ENCODE measurements at regions of chr15 and their contacts with region 1.

Region 1: DNA sequence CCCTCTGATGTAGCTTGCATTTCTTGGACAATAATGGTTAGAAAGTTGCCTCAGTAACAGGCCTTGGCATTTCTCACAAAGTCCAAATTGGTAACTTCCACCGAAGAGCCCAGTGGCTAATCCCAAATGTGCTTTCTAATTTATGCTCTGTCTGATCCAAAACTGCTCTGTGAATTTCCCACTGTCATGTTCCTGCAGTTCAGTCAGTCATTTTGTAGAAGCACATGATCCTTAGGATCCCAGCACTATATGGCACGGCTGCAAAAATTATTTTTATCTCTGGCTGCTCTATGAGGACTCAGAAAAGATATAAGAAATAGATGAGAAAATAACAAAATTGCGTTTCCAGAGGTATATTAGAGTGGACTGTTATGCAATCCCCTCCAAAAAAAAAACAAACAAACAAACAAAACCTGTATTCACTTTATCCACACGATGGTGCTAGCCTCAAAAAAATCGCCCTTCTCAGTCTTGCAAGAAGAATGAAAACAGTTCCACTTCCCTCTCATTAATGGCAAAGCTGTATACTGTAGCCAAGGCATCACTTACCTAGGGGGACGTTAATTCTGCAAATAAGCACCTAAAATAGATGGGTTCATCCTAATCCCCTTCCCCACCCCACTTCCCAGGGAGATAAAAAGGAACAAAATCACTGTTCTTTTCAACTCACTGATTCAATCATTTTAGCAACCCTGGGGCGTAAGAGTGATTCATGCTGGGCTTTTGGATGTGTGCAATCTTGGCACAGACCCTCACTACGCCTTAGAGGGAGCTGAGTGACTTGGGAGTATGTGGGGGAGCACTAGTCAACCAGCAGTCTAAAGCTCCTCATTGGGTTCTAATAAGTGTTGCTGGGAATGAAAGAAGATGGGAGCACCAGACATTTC is 61.3 kb downstream of the TMCO5A start:
- DNase-seq: peak in 1 of 5 donors; percentile 54
- H3K4me3 ChIP-seq: no peak overlapping the region
- H3K27ac ChIP-seq: no peak overlapping the region
- H3K4me1 ChIP-seq: peaks cover 3% of the 10 kb centered on the region
- H3K27me3 ChIP-seq: no peaks in the 10 kb centered on the region
- CTCF ChIP-seq: peak; percentile 36 to 60 (median 56)
- EP300 ChIP-seq: no peak
- POLR2A ChIP-seq: no peak

Region 2: GRCh38 chr15:38354315-38354929 is 358.7 kb after region 1 on chr15:
- intact Hi-C with region 1: loop called (anchors 5 to 10 kb)
- DNase-seq: peak; percentile 30 to 66 (median 46)
- H3K4me3 ChIP-seq: no peak overlapping the region
- H3K27ac ChIP-seq: no peak overlapping the region
- H3K4me1 ChIP-seq: no peaks in the 10 kb centered on the region
- H3K27me3 ChIP-seq: no peaks in the 10 kb centered on the region
- CTCF ChIP-seq: peak; percentile 30 to 66 (median 50)
- EP300 ChIP-seq: no peak
- POLR2A ChIP-seq: no peak

Region 3: DNA sequence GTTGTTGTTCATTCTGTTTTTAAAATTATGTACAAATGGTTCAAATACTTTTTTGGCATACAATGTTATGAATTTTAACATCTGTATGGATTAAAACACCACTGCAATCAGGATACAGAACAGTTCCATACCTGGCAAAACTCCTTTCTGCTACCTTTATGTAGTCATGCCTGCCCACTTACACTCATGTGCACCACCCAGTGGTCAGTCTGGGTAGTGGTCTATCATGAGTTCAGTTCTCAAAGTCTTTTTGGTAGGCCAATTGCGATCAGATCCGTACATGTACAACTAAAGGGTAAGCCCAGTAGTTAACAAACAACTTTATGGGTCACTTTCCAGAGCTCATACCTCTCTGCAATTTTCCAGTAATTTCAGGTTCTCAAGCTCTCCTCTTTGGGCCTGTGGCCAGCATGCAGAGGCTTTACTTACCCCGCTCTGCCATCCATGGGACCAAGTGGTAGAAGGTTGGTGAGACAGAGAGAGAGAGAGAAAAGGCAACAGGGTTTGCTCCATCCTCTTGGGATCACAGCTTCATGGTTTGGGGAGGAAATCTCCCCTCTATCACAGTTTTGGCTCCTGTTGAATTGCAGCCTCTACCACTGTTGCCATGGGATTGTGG is 394.3 kb after region 1 on chr15:
- intact Hi-C with region 1: loop called in 1 of 4 experiments (anchors 5 kb)
- DNase-seq: peak; percentile 38 to 76 (median 42)
- H3K4me3 ChIP-seq: no peak overlapping the region
- H3K27ac ChIP-seq: no peak overlapping the region
- H3K4me1 ChIP-seq: no peaks in the 10 kb centered on the region
- H3K27me3 ChIP-seq: no peaks in the 10 kb centered on the region
- CTCF ChIP-seq: peak; percentile 31 to 49 (median 32)
- EP300 ChIP-seq: no peak
- POLR2A ChIP-seq: no peak

Region 4: DNA sequence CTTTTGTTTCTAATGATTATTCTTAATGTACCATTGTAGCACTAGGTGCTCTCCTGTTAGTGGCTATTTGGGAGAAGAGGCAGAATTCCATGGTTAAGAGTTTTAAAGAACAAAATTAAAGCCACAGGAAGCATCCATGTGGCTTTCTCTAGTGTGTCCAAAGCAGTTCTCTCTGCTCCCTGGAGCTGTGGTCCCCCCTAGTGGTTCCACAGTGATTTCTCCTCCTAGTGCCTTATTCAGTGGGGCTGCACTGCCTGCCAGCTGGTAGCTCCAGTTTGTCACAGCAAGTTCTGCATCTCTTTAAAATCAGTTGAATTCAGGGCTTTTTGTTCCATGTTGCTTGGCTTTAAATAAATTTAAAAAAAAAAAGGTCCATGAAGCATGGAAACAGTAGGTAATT is 418.7 kb after region 1 on chr15:
- intact Hi-C with region 1: loop called in 2 of 4 experiments (anchors 5 to 10 kb)
- DNase-seq: peak; percentile 35 to 76 (median 58)
- H3K4me3 ChIP-seq: no peak overlapping the region
- H3K27ac ChIP-seq: no peak overlapping the region
- H3K4me1 ChIP-seq: peaks cover 5% of the 10 kb centered on the region
- H3K27me3 ChIP-seq: no peaks in the 10 kb centered on the region
- CTCF ChIP-seq: peak in 2 of 3 donors; percentile 15 to 63
- EP300 ChIP-seq: no peak
- POLR2A ChIP-seq: no peak